ENCODE measurements at regions of chr2 and their contacts with region 1.

Region 1: GRCh38 chr2:121128754-121129659 is 156.0 kb downstream of the TFCP2L1 start:
- DNase-seq: no peak
- ATAC-seq: peak; percentile 38 to 45

Region 2: DNA sequence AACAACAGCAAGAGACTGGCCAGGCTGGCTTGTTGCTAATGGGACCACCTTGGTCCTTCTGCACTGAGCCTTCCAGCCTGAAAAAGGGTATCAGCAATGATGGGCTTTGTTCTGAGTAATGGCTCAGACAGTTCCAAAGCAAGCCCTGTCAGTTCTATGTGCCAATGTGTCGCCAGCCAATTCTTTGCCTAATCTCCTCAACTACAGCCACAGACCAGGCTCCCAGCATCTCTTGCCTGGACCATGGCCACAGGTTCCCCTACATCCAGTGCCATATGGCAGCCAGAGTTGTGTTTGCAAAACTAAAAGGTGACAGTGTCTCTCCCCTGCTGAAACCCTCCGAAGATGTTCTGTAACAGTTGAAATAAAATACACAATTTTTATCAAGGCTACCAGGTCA is 1511.6 kb before region 1 on chr2:
- intact Hi-C with region 1: no loop called
- DNase-seq: no peak
- ATAC-seq: no peak

Region 3: GRCh38 chr2:121329786-121330185 is 200.8 kb after region 1 on chr2:
- intact Hi-C with region 1: loop called in 1 of 2 experiments (anchors 10 kb)
- DNase-seq: no peak
- ATAC-seq: no peak

Measured in left cardiac atrium (tissue), 4 donors.